Activated naive CD4-positive, alpha-beta T cell treated with anti-CD3 and anti-CD28 coated beads for 36 hours (primary cell): ENCODE measurements at regions of chr19 and their contacts with region 1.

Region 1: DNA sequence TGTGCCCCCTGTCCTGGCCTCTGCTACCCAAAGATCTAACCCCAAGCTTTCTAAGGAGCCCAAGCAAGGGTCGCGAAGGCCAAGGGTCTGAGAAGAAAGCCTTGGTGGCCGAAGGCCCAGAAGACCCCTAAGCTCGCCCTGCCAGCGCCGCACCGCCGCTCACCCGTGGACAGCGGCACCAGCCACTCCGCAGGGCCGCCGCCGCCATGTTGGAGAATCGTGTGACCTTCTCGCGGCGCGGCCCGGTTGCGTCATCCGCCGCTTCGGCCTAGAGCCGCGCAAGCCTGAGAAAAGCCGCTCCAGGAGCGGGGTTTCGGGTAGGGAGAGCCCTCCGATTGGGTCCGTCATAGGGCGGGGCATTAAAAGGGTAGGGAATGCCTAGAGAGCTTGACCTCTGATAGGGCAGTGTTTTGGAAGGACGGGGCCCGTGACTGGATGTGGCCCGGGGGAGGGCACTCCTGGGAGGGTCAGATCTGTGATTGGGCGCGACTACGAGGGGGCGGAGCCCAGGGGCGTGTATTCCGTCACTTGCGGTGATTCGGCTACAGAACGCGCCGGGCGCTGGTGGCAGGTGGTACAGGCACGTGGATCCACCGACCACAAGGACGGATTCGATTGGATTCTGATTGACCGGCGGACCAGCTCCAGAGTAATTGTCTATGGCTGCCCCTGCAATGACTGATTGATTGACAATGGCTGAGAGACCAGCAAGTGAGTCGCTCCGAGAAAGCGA is at the start of gene TIMM44:
- DNase-seq: peak; percentile 100
- H3K4me3 Mint-ChIP-seq: peak within 1 kb of the TSS; percentile 95
- H3K27ac Mint-ChIP-seq: peak within 1 kb of the TSS; percentile 94
- H3K4me1 Mint-ChIP-seq: peaks cover 41% of the 10 kb centered on the region
- H3K27me3 Mint-ChIP-seq: no peaks in the 10 kb centered on the region
- total RNA-seq, gene TIMM44: 88.8 to 88.9 TPM

Region 2: GRCh38 chr19:7829561-7830271 is 113.9 kb before region 1 on chr19 and contains the start of gene EVI5L:
- CTCF ChIA-PET with region 1: no interaction called
- intact Hi-C with region 1: loop called (anchors 1 kb)
- DNase-seq: peak; percentile 99
- H3K4me3 Mint-ChIP-seq: peak within 1 kb of the TSS; percentile 84
- H3K27ac Mint-ChIP-seq: peak within 1 kb of the TSS; percentile 68
- H3K4me1 Mint-ChIP-seq: peaks cover 18% of the 10 kb centered on the region
- H3K27me3 Mint-ChIP-seq: peaks cover 6% of the 10 kb centered on the region
- total RNA-seq, gene EVI5L: 5.2 TPM

Region 3: DNA sequence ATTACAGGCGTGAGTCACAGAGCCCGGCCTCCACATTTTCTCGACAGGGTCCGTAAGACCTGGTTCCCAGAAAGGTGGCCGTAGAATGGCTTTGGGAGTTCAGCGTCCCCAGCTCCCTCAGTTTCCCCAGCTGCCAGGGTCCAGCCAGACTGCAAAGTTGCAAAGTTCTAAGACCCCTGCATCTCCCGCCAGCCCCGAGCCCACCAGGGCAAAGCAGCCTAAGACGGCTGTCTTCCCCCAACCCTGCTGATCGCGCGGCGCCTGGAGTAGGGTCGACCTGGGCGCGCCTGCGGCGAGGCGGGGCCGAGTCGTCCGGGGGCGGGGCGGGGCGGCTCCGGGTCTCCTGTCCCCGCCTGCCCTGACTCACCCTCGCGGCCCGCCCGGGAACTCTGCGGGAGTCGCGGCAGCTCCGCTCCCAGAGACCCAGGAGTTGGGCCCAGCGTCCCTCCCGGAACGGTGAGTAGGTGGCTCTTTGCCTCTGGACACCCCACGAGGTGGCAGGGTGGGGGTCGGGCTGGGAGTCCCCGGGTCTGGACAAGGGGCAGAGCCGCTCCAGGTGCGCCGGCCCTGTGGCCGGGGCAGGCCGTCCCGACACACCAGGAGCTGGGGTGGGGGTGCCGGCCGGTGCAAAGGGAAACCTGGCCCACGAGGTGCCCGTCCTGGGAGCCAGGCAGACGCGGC is 55.3 kb before region 1 on chr19 and contains the start of gene LRRC8E:
- CTCF ChIA-PET with region 1: no interaction called
- intact Hi-C with region 1: no loop called
- DNase-seq: peak; percentile 50
- H3K4me3 Mint-ChIP-seq: no peak within 1 kb of the TSS
- H3K27ac Mint-ChIP-seq: no peak within 1 kb of the TSS
- H3K4me1 Mint-ChIP-seq: no peaks in the 10 kb centered on the region
- H3K27me3 Mint-ChIP-seq: peaks cover 16% of the 10 kb centered on the region
- total RNA-seq, gene LRRC8E: not detected

Region 4: GRCh38 chr19:7903244-7904073 is 40.2 kb before region 1 on chr19 and contains the start of gene MAP2K7:
- CTCF ChIA-PET with region 1: interaction called, 3 read pairs
- intact Hi-C with region 1: loop called (anchors 1 kb)
- DNase-seq: peak; percentile 100
- H3K4me3 Mint-ChIP-seq: peak within 1 kb of the TSS; percentile 88
- H3K27ac Mint-ChIP-seq: peak within 1 kb of the TSS; percentile 84
- H3K4me1 Mint-ChIP-seq: peaks cover 24% of the 10 kb centered on the region
- H3K27me3 Mint-ChIP-seq: no peaks in the 10 kb centered on the region
- total RNA-seq, gene MAP2K7: 39.1 to 39.8 TPM

Region 5: GRCh38 chr19:7925171-7925851 is 18.3 kb before region 1 on chr19:
- CTCF ChIA-PET with region 1: interaction called, 18 read pairs
- intact Hi-C with region 1: loop called (anchors 1 kb)
- DNase-seq: peak; percentile 76
- H3K4me3 Mint-ChIP-seq: peak overlapping the region; percentile 71
- H3K27ac Mint-ChIP-seq: no peak overlapping the region
- H3K4me1 Mint-ChIP-seq: peaks cover 24% of the 10 kb centered on the region
- H3K27me3 Mint-ChIP-seq: no peaks in the 10 kb centered on the region

Region 6: DNA sequence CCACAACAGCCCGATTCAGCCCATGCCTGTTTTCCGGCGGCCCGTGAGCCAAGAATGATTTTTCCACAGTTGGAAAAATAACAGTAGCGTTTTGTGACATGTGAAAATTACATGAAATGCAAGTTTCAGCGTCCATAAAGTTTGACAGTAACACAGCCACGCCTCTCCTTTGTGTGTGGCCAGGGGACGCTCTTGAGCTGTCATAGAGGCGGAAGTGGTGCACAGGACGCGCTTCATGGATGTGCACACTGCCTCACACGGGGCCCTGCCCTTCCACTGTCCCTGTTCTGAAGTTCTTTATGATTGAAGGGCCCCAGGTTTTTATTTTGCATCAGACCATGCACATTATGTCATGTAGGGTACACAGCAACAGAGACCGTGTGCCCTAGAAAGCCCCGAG is 74.2 kb after region 1 on chr19:
- CTCF ChIA-PET with region 1: no interaction called
- intact Hi-C with region 1: no loop called
- DNase-seq: peak; percentile 49
- H3K4me3 Mint-ChIP-seq: no peak overlapping the region
- H3K27ac Mint-ChIP-seq: no peak overlapping the region
- H3K4me1 Mint-ChIP-seq: peaks cover 2% of the 10 kb centered on the region
- H3K27me3 Mint-ChIP-seq: no peaks in the 10 kb centered on the region

Region 7: GRCh38 chr19:8050274-8051096 is 106.9 kb after region 1 on chr19:
- CTCF ChIA-PET with region 1: no interaction called
- intact Hi-C with region 1: loop called (anchors 5 kb)
- DNase-seq: peak; percentile 95
- H3K4me3 Mint-ChIP-seq: peak overlapping the region; percentile 47
- H3K27ac Mint-ChIP-seq: no peak overlapping the region
- H3K4me1 Mint-ChIP-seq: peaks cover 15% of the 10 kb centered on the region
- H3K27me3 Mint-ChIP-seq: no peaks in the 10 kb centered on the region

Region 8: DNA sequence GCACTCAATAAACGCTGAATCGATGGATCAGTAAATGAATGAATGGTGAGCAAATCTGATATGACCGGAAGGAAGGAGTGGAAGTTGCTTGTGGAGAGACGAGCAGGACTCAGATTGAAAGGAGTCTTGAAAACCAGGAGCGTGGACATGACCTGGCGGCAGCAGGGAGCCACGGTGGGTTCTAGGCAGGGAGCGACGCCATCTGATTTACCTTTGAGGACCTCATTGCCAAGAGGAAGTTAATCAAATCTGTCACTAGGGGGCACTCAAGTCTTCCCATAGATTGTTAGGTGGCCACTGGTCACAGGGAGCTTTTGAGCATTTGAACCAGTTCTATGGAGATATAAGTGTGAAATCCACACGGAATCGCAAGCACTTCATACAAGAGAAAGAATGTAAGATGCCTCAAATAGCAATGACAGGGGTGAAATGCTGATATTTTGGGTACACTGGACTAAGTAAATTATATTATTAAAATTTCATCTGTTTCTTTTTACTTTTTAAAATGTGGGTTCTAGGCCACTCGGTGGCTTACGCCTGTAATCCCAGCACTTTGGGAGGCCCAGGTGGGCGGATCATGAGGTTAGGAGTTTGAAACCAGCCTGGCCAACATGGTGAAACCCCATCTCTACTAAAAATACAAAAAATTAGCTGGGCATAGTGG is 214.9 kb after region 1 on chr19:
- CTCF ChIA-PET with region 1: no interaction called
- intact Hi-C with region 1: loop called (anchors 2 kb)
- DNase-seq: peak; percentile 63
- H3K4me3 Mint-ChIP-seq: no peak overlapping the region
- H3K27ac Mint-ChIP-seq: no peak overlapping the region
- H3K4me1 Mint-ChIP-seq: peaks cover 1% of the 10 kb centered on the region
- H3K27me3 Mint-ChIP-seq: peaks cover 13% of the 10 kb centered on the region